ENCODE measurements at regions of chr13 and their contacts with region 1.

Region 1: GRCh38 chr13:94674609-94675348 is 37.6 kb downstream of the SOX21 start:
- DNase-seq: peak; percentile 80
- H3K4me3 Mint-ChIP-seq: no peak overlapping the region
- H3K27ac Mint-ChIP-seq: no peak overlapping the region
- H3K4me1 Mint-ChIP-seq: no peaks in the 10 kb centered on the region
- H3K27me3 Mint-ChIP-seq: peaks cover 29% of the 10 kb centered on the region

Region 2: DNA sequence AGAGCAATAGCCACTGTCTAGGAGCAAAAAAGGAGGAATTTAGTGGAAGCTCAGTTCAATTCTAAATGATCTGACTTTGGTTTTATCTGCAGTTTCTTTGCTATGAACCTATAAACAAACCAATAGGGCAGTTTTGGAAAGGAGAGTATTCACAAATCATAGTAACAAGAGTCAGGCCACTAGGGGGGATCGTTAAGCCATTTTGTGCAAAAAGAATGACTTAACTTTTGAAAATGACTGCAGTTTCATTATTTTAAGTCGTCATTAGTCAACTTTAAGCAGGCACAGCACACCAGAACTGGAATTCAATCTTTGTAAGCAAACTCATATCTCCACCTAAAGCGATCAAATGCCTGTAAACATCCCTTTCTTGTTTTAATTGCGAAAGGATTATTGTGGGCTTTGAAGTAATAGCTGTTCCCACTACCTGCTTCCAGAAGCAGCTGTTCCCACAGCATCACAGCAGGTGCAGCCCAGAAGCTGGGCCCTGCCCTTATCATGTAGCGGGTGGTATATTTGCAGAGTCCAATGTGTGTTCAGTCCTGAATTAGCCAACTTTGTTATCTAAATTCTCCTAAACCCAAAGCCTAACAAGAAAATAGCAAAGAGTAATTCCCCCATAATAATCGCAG is 14.0 kb before region 1 on chr13:
- intact Hi-C with region 1: loop called (anchors 2 kb)
- DNase-seq: no peak
- H3K4me3 Mint-ChIP-seq: no peak overlapping the region
- H3K27ac Mint-ChIP-seq: no peak overlapping the region
- H3K4me1 Mint-ChIP-seq: peaks cover 35% of the 10 kb centered on the region
- H3K27me3 Mint-ChIP-seq: peaks cover 16% of the 10 kb centered on the region

Region 3: DNA sequence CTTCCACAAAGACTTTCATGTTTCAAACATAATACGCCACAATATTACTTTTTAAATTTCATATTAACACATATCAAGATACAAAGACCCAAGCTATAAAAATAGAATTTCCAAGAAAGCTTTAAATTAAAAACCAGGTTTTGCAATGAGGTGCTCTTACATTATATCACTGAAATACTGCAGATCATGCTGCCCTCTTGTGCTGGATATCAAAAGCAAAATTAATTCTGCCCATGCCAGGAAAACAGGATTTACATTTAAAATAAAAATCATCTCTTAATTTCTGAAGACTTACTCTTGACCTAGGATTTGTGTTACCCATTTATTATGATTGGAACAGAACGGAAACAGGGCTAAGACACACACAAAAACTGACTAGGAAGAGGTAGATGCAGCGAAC is 481.4 kb after region 1 on chr13:
- intact Hi-C with region 1: loop called (anchors 10 kb)
- DNase-seq: no peak
- H3K4me3 Mint-ChIP-seq: no peak overlapping the region
- H3K27ac Mint-ChIP-seq: no peak overlapping the region
- H3K4me1 Mint-ChIP-seq: peaks cover 8% of the 10 kb centered on the region
- H3K27me3 Mint-ChIP-seq: no peaks in the 10 kb centered on the region

Region 4: GRCh38 chr13:95403828-95404522 is 729.2 kb after region 1 on chr13:
- intact Hi-C with region 1: loop called (anchors 1 kb)
- DNase-seq: peak; percentile 92
- H3K4me3 Mint-ChIP-seq: peak overlapping the region; percentile 80
- H3K27ac Mint-ChIP-seq: no peak overlapping the region
- H3K4me1 Mint-ChIP-seq: peaks cover 7% of the 10 kb centered on the region
- H3K27me3 Mint-ChIP-seq: peaks cover 7% of the 10 kb centered on the region

Measured in activated CD4-positive, alpha-beta T cell treated with anti-CD3 and anti-CD28 coated beads, Interleukin-2, amount 10 ng/mL, durations not matched to agents 24 days and 14 days (primary cell).